ENCODE measurements at regions of chr16 and their contacts with region 1.

Region 1: DNA sequence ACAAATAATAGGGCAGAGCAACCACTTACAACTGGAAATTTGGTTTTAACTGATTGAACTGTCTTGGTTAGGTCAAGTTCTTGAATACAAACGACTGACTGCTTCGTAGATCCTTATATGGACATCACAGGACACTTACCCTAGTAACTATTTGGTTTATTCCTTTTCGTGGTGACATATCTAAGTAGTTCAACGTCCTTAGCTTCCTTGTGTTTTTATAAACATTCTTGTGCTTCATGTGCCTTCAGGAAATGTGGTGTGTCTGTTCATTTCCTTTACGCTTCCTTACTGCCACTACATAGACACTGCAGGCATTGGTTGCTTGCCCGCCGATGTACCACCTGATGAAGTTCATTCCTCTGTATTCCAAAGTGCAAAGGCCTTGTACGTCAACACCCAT is 59.3 kb downstream of the USP10 start:
- DNase-seq: no peak
- H3K4me3 ChIP-seq: no peak overlapping the region
- H3K27ac ChIP-seq: peak overlapping the region in 2 of 4 donors; percentile 10 to 19
- H3K4me1 ChIP-seq: peaks cover 15 to 31% (median 17%) of the 10 kb centered on the region in 3 donors
- H3K27me3 ChIP-seq: no peaks in the 10 kb centered on the region
- CTCF ChIP-seq: no peak
- POLR2A ChIP-seq: no peak

Region 2: GRCh38 chr16:84952335-84953189 is 193.5 kb after region 1 on chr16:
- intact Hi-C with region 1: loop called (anchors 5 kb)
- DNase-seq: no peak
- H3K4me3 ChIP-seq: no peak overlapping the region
- H3K27ac ChIP-seq: peak overlapping the region in 3 of 4 donors; percentile 25 to 44 (median 27)
- H3K4me1 ChIP-seq: peaks cover 6 to 27% (median 9%) of the 10 kb centered on the region in 3 donors
- H3K27me3 ChIP-seq: no peaks in the 10 kb centered on the region
- CTCF ChIP-seq: peak; percentile 51 to 97 (median 92)
- POLR2A ChIP-seq: no peak